Adrenal gland (tissue), 19 donors: ENCODE measurements at regions of chr9 and their contacts with region 1.

Region 1: GRCh38 chr9:118364266-118365106 is 660.3 kb downstream of the TLR4 start:
- DNase-seq: no peak
- H3K4me3 ChIP-seq: no peak overlapping the region
- H3K27ac ChIP-seq: no peak overlapping the region
- H3K4me1 ChIP-seq: no peaks in the 10 kb centered on the region
- H3K27me3 ChIP-seq: no peaks in the 10 kb centered on the region
- CTCF ChIP-seq: no peak
- POLR2A ChIP-seq: no peak

Region 2: DNA sequence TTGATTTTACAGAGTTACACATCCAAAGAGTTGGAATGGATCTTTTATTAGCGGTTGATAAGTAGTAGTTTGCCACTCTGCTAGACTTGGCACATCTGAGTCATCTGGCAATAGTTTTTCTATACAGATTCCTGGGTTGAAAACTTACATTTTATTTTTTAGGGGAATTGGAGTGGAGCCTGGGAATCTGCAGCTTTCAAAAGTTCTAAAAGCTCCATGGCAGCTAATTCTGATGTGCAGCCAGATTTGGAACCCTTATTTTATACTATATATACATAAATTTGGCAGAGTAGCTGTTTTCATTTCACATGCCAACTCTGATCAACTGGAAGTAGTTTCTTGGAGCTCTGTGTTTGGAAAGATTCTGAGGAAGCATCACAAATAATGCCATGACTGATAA is 55.2 kb after region 1 on chr9:
- intact Hi-C with region 1: loop called in 1 of 2 experiments (anchors 10 kb)
- DNase-seq: no peak
- H3K4me3 ChIP-seq: no peak overlapping the region
- H3K27ac ChIP-seq: no peak overlapping the region
- H3K4me1 ChIP-seq: no peaks in the 10 kb centered on the region
- H3K27me3 ChIP-seq: no peaks in the 10 kb centered on the region
- CTCF ChIP-seq: no peak
- POLR2A ChIP-seq: no peak